HepG2 (cell line): ENCODE measurements at regions of chr3 and their contacts with region 1.

Region 1: DNA sequence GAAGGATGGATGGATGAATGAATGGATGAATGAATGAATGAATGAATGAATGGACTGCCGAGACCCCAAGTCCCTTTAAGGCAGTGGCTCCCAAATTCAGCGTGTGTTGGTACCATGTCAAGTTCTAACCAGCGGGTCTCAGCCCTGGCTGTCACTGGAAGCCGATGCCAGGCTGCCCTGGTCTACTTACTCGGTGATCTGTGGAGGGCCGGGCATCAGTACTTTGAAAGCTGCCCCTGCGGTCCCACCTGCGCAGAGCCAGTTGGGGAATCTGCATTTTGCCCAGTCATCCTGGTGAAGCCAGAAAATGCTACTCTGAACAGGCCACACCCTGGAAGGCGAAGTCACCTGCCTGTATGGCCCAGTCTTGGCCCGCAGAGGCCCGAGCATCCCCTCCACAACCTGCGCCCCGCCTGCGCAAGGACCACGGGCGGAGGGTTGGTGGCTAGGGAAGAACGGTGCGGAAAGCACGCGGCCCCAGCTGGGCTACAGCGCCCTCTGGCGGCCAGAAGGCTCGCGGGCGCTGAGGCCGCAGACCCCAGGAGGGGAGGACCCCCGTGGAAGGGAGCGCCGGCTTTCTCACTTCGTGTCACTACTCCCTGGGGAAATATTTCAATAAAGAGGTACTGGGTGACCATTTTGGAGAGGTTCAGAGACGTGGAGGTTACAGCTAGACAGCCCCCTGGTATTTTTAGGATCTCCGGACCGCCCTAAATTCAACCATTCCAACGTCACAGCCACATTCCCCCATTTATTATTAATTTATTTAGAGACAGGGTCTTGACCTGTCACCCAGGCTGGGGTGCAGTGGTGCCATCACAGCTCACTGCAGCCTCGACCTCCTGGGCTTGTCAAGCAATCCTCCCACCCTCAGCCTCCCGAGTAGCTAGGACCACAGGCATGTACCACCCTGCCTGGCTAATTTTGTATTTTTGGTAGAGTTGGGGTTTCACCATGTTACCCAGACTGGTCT is 34.9 kb downstream of the PRKCD start:
- DNase-seq: no peak
- ATAC-seq: peak; percentile 77
- H3K4me3 ChIP-seq: peak overlapping the region in 1 of 3 experiments; percentile 11; a peak in 2 of 6 replicates
- H3K27ac ChIP-seq: no peak overlapping the region
- H3K4me1 ChIP-seq: peaks cover 38% of the 10 kb centered on the region
- H3K27me3 ChIP-seq: no peaks in the 10 kb centered on the region
- CTCF ChIP-seq: peak; percentile 97
- EP300 ChIP-seq: no peak
- POLR2A ChIP-seq: no peak
- RAD21 ChIP-seq: peak; percentile 98

Region 2: DNA sequence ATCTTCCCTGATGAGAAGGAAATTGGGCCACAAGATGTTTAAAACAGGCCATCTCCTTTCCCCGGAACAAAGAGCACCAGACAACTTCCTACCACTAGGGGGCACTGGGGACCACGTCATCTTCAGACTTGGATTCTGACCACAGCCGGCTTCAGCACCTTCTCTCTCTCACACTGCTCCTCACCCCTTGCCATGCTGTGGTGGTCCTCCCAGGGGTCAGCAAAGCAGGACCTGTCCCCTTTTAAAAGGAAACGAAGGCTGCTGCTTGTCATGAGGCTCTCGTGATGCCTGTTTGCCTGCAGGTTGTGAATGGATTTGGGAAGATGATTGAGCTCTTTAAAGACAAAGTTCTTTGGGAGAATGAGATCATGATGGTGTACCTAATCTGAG is 81.9 kb before region 1 on chr3:
- CTCF ChIA-PET with region 1: interaction called, 81 read pairs
- POLR2A ChIA-PET with region 1: interaction called, 4 read pairs
- in situ Hi-C with region 1: no loop called
- intact Hi-C with region 1: loop called (anchors 1 kb)
- DNase-seq: peak; percentile 66
- ATAC-seq: peak; percentile 88
- H3K4me3 ChIP-seq: no peak overlapping the region
- H3K27ac ChIP-seq: no peak overlapping the region
- H3K4me1 ChIP-seq: peaks cover 11% of the 10 kb centered on the region
- H3K27me3 ChIP-seq: no peaks in the 10 kb centered on the region; a peak in 1 of 5 replicates
- CTCF ChIP-seq: peak; percentile 95
- EP300 ChIP-seq: no peak
- POLR2A ChIP-seq: no peak
- RAD21 ChIP-seq: peak; percentile 86

Region 3: DNA sequence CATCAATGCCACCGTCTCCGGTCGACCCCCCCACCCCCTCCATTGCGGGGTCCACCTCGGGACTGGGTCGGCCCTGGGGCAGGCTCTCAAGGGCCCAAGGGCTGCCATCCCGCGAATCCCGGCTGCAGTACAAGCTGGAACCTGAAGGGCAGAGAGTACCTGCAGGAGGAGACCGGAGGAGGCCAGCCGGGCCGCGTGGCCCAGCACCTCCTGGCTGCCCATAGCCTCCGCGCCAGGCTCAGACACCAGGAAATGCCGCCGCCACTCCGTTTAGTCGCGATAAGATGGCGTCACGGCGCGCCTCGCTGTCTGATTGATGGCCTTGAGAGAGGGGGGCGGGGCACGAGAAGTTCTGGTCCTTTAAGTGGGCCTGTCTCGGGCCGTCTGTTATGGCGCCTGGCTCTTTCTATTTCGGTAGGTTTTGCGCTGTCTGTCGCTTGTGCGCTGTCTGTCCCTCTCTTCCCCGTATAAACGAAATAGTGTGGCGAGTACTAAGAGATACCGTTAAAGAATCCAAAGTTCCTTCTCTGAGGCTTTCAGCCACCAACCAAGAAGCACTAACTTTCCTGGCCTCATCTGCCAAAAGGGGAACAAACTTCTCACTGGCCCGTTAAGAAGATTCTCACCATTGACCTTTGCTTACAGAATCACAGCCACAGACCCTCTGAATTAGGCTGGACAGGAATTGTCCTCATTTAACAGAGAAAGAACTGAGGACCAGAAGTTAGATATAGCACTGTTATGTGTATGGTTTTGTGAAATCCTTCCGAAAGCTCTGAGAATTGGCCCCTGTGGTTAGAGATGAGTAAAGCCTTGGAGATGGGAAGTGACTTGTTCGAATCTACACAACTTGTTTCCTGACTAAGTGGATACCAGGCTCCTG is 65.5 kb before region 1 on chr3 and contains the start of gene RFT1:
- CTCF ChIA-PET with region 1: interaction called, 53 read pairs
- POLR2A ChIA-PET with region 1: interaction called, 7 read pairs
- in situ Hi-C with region 1: loop called (anchors 5 kb)
- intact Hi-C with region 1: loop called (anchors 1 kb)
- DNase-seq: peak; percentile 93
- ATAC-seq: peak; percentile 88
- H3K4me3 ChIP-seq: peak within 1 kb of the TSS; percentile 80 to 99 (median 86)
- H3K27ac ChIP-seq: peak within 1 kb of the TSS; percentile 75
- H3K4me1 ChIP-seq: peaks cover 52% of the 10 kb centered on the region
- H3K27me3 ChIP-seq: no peaks in the 10 kb centered on the region; a peak in 1 of 5 replicates
- CTCF ChIP-seq: no peak; the same call in 1 of the 2 replicates
- EP300 ChIP-seq: peak in 1 of 2 experiments; percentile 27; a peak in 1 of 4 replicates
- POLR2A ChIP-seq: peak; percentile 91
- RAD21 ChIP-seq: peak; percentile 23
- total RNA-seq, gene RFT1: 25.7 and 37.0 TPM in 2 replicates

Region 4: DNA sequence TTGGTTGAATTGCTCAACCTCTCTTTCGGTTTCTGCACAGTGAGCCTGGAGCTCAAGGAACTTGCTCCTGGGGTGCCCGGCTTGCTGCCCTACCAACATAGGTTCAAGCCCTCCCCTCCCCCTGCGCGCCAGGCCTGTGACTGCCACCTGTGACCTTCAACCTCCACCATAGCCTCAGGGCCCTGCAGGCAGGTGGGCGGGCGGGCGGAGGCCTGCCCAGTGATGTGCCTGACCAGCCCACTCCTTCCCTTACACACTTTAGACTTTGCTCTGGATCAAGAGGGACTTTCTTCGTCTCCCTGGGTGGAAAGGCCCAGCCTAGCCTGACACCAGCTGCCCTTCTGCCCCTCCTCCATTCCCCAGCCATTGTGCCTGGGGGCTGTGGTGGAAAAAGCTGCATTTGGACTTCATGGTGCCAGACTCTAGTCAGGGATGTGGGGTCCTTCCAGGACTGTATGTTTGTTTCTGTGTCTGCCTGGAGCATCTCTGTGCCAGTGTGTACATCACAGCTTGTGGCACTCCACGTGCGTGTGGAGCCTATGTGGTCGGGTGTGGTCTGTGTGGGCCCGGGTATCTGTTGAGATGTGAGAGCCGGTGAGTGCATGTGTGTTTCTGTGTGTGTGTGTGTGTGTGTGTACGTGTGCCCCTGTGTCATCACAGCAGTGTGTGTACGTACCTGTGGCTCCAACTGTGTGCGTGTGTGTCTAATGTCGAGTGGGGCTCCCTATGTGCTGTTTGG is 25.4 kb before region 1 on chr3:
- CTCF ChIA-PET with region 1: no interaction called
- POLR2A ChIA-PET with region 1: interaction called, 13 read pairs
- in situ Hi-C with region 1: no loop called
- intact Hi-C with region 1: no loop called
- DNase-seq: peak; percentile 51
- ATAC-seq: peak; percentile 27
- H3K4me3 ChIP-seq: peak overlapping the region in 1 of 3 experiments; percentile 42; a peak in 2 of 6 replicates
- H3K27ac ChIP-seq: peak overlapping the region; percentile 76
- H3K4me1 ChIP-seq: peaks cover 62% of the 10 kb centered on the region
- H3K27me3 ChIP-seq: no peaks in the 10 kb centered on the region
- CTCF ChIP-seq: no peak
- EP300 ChIP-seq: 0 out of 4 replicates have a peak, but pooled peaks of 1 of the 2 experiments have one; percentile 15
- POLR2A ChIP-seq: peak in 1 of 2 experiments; percentile 36; a peak in 2 of 4 replicates
- RAD21 ChIP-seq: no peak

Region 5: DNA sequence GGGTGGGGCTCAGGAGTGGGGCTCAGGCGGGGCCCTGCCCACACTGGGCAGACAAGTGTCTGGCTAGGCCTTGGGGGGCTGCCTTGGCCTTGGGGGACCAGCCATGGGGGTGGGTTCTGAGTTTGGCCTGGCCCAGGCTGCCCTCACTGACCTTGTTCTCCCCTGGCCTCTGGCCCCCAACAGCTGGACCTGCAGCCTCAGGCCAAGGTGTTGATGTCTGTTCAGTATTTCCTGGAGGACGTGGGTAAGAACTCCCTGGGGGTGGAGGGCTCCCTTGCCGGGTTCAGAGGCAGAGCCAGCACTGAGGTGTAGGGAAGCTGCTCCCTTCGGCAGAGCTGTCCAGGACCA is 14.9 kb before region 1 on chr3:
- CTCF ChIA-PET with region 1: no interaction called
- POLR2A ChIA-PET with region 1: no interaction called
- in situ Hi-C with region 1: no loop called
- intact Hi-C with region 1: no loop called
- DNase-seq: no peak
- ATAC-seq: no peak
- H3K4me3 ChIP-seq: no peak overlapping the region
- H3K27ac ChIP-seq: no peak overlapping the region
- H3K4me1 ChIP-seq: no peaks in the 10 kb centered on the region
- H3K27me3 ChIP-seq: no peaks in the 10 kb centered on the region
- CTCF ChIP-seq: no peak
- EP300 ChIP-seq: no peak
- POLR2A ChIP-seq: no peak
- RAD21 ChIP-seq: no peak